ENCODE measurements at regions of chr9 and their contacts with region 1.

Region 1: GRCh38 chr9:70563431-70564204 is 149.2 kb upstream of the KLF9 start:
- DNase-seq: peak in 9 of 10 donors; percentile 16 to 84 (median 62)
- ATAC-seq: peak; percentile 95
- H3K4me3 Mint-ChIP-seq: peak overlapping the region; percentile 48 to 78 (median 58)
- H3K27ac Mint-ChIP-seq: peak overlapping the region; percentile 86 to 98 (median 94)
- H3K4me1 Mint-ChIP-seq: peaks cover 28 to 54% (median 44%) of the 10 kb centered on the region in 4 donors
- H3K27me3 Mint-ChIP-seq: no peaks in the 10 kb centered on the region

Region 2: GRCh38 chr9:70574151-70574837 is 10.7 kb after region 1 on chr9:
- POLR2A ChIA-PET with region 1: interaction called, 25 read pairs
- DNase-seq: no peak
- ATAC-seq: no peak
- H3K4me3 Mint-ChIP-seq: no peak overlapping the region
- H3K27ac Mint-ChIP-seq: peak overlapping the region in 3 of 10 donors; percentile 8 to 41 (median 28)
- H3K4me1 Mint-ChIP-seq: peaks cover 0 to 7% (median 6%) of the 10 kb centered on the region in 4 donors
- H3K27me3 Mint-ChIP-seq: no peaks in the 10 kb centered on the region

Measured in naive thymus-derived CD8-positive, alpha-beta T cell (primary cell).